ENCODE measurements at regions of chr1 and their contacts with region 1.

Region 1: DNA sequence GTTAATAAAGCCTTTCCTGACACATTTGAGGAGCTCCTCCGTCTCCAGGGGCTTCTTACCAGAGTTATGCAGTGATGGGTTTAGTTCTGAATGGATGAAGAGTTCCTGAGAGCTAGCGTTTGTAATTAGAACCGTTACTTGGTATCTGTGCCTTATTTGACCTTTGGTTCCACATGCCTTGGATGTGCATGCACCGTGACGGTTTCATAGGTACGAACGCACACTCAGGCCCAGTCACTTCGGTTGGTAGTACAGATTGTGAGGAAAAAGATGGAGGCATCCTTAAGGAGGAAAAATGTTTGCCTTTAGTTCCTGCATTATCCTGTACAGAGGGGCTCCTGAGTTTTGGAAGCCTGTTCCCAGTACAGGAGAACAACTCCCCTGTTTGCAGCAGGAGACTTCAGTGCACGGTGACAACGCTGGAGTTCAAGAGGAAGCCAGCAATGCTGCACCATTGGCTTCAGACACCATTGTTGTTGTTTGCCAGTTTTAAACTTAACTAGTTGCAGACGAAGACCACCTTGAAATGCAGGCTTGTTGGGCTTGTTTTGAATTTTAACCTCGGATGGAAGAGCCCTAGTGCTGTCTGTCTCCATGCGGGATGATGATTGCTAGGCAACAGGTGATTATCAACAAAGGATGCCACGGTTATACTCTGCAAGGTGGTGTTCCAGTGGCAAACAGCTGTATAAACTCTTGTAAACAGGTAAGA is 8.2 kb downstream of the RBM15 start:
- DNase-seq: no peak
- ATAC-seq: peak; percentile 46
- H3K4me3 ChIP-seq: peak overlapping the region; percentile 47
- H3K27ac ChIP-seq: peak overlapping the region; percentile 23; the same call in 1 of the 2 replicates
- H3K4me1 ChIP-seq: peaks cover 10% of the 10 kb centered on the region
- H3K27me3 ChIP-seq: no peaks in the 10 kb centered on the region
- CTCF ChIP-seq: no peak
- EP300 ChIP-seq: no peak
- POLR2A ChIP-seq: peak; percentile 40; the same call in 1 of the 2 replicates
- RAD21 ChIP-seq: no peak

Region 2: GRCh38 chr1:108877348-108878159 is 1469.8 kb before region 1 on chr1:
- CTCF ChIA-PET with region 1: no interaction called
- POLR2A ChIA-PET with region 1: no interaction called
- RAD21 ChIA-PET with region 1: no interaction called
- SMC1A ChIA-PET with region 1: no interaction called
- in situ Hi-C with region 1: no loop called
- intact Hi-C with region 1: no loop called
- DNase-seq: no peak
- ATAC-seq: peak; percentile 7; the same call in 2 of the 3 replicates
- H3K4me3 ChIP-seq: peak overlapping the region; percentile 73
- H3K27ac ChIP-seq: peak overlapping the region; percentile 61
- H3K4me1 ChIP-seq: no peaks in the 10 kb centered on the region
- H3K27me3 ChIP-seq: no peaks in the 10 kb centered on the region
- CTCF ChIP-seq: no peak
- EP300 ChIP-seq: no peak
- POLR2A ChIP-seq: no peak
- RAD21 ChIP-seq: no peak

Region 3: GRCh38 chr1:109917768-109918606 is 429.4 kb before region 1 on chr1:
- CTCF ChIA-PET with region 1: no interaction called
- POLR2A ChIA-PET with region 1: no interaction called
- RAD21 ChIA-PET with region 1: no interaction called
- SMC1A ChIA-PET with region 1: no interaction called
- in situ Hi-C with region 1: no loop called
- intact Hi-C with region 1: no loop called
- DNase-seq: no peak
- ATAC-seq: peak; percentile 45
- H3K4me3 ChIP-seq: no peak overlapping the region
- H3K27ac ChIP-seq: no peak overlapping the region
- H3K4me1 ChIP-seq: no peaks in the 10 kb centered on the region
- H3K27me3 ChIP-seq: no peaks in the 10 kb centered on the region
- CTCF ChIP-seq: peak in 2 of 3 experiments; percentile 23 to 28; a peak in 2 of 6 replicates
- EP300 ChIP-seq: no peak
- POLR2A ChIP-seq: no peak
- RAD21 ChIP-seq: 0 out of 2 replicates have a peak, but pooled peaks have one; percentile 4

Region 4: DNA sequence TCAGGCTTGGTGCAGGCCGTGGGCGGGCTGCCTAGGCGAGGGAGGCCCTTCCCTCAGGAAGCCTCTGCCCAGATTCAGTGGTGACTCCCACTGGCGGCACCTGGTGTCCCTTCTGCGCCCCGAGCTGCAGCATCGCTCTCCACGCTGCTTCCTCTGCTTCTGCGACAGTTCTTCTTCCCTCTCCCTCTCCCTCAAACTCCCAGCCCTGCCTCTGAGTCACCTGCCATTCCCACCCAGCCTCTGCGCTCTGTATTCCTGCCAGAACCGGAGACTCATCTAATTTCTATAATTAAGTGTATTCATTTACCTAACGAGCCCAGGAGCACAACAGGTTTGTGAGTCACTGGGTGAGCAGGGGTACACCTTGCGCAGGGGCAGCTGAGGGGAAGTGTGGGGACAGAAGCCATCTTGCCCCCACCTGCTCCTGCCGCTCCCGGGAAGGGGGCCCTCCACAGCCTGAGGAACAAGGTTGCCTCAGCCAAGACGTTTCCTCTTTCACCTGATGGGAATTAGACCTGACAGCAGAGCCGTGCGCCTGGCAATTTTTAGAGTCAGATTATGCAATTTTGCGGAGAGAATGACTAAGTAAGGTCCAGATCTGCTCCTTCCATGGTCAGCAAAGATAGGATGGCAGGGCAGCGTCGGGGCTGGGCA is 117.9 kb before region 1 on chr1:
- CTCF ChIA-PET with region 1: no interaction called
- POLR2A ChIA-PET with region 1: no interaction called
- RAD21 ChIA-PET with region 1: no interaction called
- SMC1A ChIA-PET with region 1: no interaction called
- in situ Hi-C with region 1: no loop called
- intact Hi-C with region 1: no loop called
- DNase-seq: no peak
- ATAC-seq: no peak
- H3K4me3 ChIP-seq: no peak overlapping the region
- H3K27ac ChIP-seq: no peak overlapping the region
- H3K4me1 ChIP-seq: no peaks in the 10 kb centered on the region
- H3K27me3 ChIP-seq: no peaks in the 10 kb centered on the region
- CTCF ChIP-seq: no peak
- EP300 ChIP-seq: no peak
- POLR2A ChIP-seq: no peak
- RAD21 ChIP-seq: no peak

Region 5: DNA sequence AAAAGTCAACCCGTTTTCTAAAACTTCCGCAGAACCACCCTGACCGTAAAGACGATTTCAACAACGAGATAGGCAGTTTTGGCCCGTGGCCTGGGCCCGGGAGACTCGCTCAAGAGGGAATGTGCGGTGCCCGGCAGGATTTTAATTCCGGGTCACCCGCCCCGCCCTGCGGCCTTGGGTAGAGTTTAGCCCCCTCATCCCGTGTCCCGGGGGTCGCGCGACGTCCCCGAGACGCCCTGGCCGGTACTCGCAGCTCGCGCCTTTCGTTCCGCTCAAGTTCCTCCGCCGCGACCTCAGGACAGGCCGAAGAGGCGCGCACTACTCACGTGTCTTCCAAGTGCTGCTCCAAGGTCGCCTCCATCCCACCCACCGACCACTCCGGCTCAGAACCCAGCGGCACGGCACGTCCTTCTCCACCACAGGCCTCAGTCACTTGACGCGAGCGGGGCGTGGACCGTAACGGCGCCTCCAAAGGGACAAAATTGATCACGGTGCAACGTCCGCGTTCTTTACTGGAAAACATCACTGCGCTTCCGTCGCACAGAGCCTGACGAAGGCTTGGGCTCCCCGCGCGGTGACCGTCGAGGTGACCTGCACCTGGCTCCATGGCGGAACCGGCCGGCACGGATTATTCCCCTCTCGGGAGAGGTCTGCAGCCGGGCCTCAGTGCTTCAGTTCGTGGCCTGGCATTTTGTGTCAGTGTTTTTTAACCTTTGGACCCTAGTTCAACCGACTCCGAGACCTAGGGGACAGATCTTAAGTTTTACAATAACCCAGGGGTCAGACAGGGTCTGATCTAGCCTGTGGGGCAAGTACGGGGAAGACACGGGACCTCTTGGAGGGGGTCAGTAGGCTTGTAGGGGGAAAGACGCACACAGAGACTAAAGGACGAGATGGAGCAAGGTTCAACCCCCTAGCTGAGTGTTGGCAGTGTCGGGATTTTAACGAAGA is 60.2 kb after region 1 on chr1 and contains the start of gene LAMTOR5:
- CTCF ChIA-PET with region 1: interaction called, 35 read pairs
- POLR2A ChIA-PET with region 1: interaction called, 4 read pairs
- RAD21 ChIA-PET with region 1: interaction called, 9 read pairs
- SMC1A ChIA-PET with region 1: interaction called, 19 read pairs
- in situ Hi-C with region 1: no loop called
- intact Hi-C with region 1: no loop called
- DNase-seq: peak; percentile 86
- ATAC-seq: peak; percentile 94
- H3K4me3 ChIP-seq: peak within 1 kb of the TSS; percentile 99
- H3K27ac ChIP-seq: peak within 1 kb of the TSS; percentile 85
- H3K4me1 ChIP-seq: peaks cover 10% of the 10 kb centered on the region
- H3K27me3 ChIP-seq: no peaks in the 10 kb centered on the region
- CTCF ChIP-seq: peak in 2 of 3 experiments; percentile 12 to 14; a peak in 2 of 6 replicates
- EP300 ChIP-seq: peak; percentile 22 to 49; a peak in 2 of 4 replicates
- POLR2A ChIP-seq: peak; percentile 97
- RAD21 ChIP-seq: peak; percentile 35; the same call in 1 of the 2 replicates
- polyA plus RNA-seq, gene LAMTOR5: 474 to 613 TPM

Measured in GM12878 (cell line).